ENCODE measurements at regions of chr10 and their contacts with region 1.

Region 1: GRCh38 chr10:114403541-114404161 is 651 bp downstream of the AFAP1L2 start:
- DNase-seq: peak; percentile 75 to 76
- H3K4me3 ChIP-seq: peak overlapping the region; percentile 56 to 83 (median 66)
- H3K27ac ChIP-seq: peak overlapping the region; percentile 97 to 98 (median 98)
- H3K4me1 ChIP-seq: peaks cover 47 to 58% of the 10 kb centered on the region in 2 donors
- H3K27me3 ChIP-seq: no peaks in the 10 kb centered on the region
- CTCF ChIP-seq: peak in 3 of 6 experiments; percentile 25 to 45 (median 40)
- POLR2A ChIP-seq: peak in 1 of 2 donors; percentile 75

Region 2: GRCh38 chr10:114245121-114245791 is 158.4 kb before region 1 on chr10:
- intact Hi-C with region 1: no loop called
- DNase-seq: no peak
- H3K4me3 ChIP-seq: no peak overlapping the region
- H3K27ac ChIP-seq: no peak overlapping the region
- H3K4me1 ChIP-seq: peaks cover 0 to 3% of the 10 kb centered on the region in 2 donors
- H3K27me3 ChIP-seq: no peaks in the 10 kb centered on the region
- CTCF ChIP-seq: no peak
- POLR2A ChIP-seq: no peak

Region 3: DNA sequence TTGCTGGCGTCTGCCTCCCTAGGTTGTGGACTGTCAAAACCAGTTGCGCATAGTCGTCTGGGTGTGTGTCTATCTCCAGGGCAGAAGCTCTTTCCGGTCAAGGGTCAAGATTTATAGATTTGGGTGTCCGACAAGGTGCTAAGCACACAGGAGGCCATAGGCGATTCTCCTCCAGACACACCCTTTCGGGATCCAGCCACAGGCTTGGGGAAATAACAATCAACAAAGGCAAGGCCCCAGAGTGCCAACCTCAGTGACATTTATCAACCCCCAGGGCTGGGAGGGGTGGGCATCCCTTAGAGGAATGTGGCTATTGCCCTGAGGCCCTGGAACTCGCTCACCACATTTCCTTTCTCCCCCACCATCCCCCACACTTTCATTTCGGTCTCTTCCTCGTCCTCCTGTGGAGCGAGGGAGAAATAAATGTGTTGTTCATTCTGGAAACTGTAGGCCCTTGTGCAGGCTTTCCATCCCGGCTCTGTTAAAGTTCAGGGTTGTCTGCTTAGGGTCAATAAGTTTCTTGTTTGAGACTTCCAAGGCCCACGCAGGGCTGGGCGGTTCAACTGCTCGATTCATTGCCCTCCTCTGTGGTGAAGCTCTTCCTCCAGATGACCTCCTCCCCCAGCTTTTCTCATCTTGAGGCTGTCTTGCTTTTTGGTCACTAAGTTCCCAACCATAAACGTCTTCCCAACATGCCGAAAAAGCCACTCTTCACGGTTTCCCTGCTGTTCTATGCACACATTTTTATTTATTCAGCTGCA is 57.2 kb before region 1 on chr10:
- intact Hi-C with region 1: loop called (anchors 10 kb)
- DNase-seq: no peak
- H3K4me3 ChIP-seq: no peak overlapping the region
- H3K27ac ChIP-seq: peak overlapping the region in 2 of 3 donors; percentile 17 to 90
- H3K4me1 ChIP-seq: peaks cover 67 to 81% of the 10 kb centered on the region in 2 donors
- H3K27me3 ChIP-seq: no peaks in the 10 kb centered on the region
- CTCF ChIP-seq: no peak
- POLR2A ChIP-seq: no peak

Region 4: GRCh38 chr10:114458955-114459354 is 55.3 kb after region 1 on chr10:
- intact Hi-C with region 1: loop called (anchors 5 kb)
- DNase-seq: peak; percentile 53 to 64
- H3K4me3 ChIP-seq: no peak overlapping the region
- H3K27ac ChIP-seq: peak overlapping the region in 1 of 3 donors; percentile 9
- H3K4me1 ChIP-seq: no peaks in the 10 kb centered on the region
- H3K27me3 ChIP-seq: no peaks in the 10 kb centered on the region
- CTCF ChIP-seq: peak in 4 of 6 experiments; percentile 47 to 75 (median 58)
- POLR2A ChIP-seq: no peak